Motor neuron (in vitro differentiated cells): ENCODE measurements at regions of chr3 and their contacts with region 1.

Region 1: DNA sequence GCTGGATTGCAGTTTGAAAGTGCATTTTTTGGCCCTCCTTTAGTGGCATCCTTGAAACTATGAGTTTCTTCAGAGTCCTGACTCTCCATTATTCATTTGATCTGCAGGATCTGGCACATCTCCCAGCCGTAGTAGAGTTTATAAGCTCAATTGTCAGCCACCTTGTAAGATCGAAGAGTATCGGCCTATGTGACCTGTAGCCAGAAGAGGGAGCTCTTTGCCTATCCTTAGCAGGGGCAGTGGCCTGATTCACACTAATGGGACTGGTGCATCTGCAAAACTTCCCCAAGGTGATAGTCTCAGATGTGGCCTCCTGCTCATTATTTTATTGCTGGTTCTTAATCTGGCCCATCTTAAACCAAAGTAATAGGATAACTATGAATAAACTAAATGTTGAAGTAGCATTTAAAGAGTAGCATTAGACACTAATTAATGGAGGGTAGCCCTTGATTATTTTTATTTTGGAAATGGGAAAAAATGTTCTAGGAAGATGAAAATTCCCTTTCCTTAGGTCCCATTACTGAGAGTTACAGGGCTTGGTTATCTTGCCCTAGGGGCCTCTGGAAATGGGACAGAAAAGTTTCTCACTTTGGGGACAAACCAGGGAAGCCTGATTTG is 21.2 kb downstream of the GCSAM start:
- ATAC-seq: peak; percentile 69 to 99 (median 83)
- H3K4me3 ChIP-seq: no peak overlapping the region
- H3K27ac ChIP-seq: no peak overlapping the region
- H3K4me1 ChIP-seq: no peaks in the 10 kb centered on the region

Region 2: GRCh38 chr3:111481551-111481950 is 630.3 kb before region 1 on chr3:
- in situ Hi-C with region 1: no loop called
- ATAC-seq: peak in 1 of 8 experiments; percentile 20
- H3K4me3 ChIP-seq: no peak overlapping the region
- H3K27ac ChIP-seq: no peak overlapping the region
- H3K4me1 ChIP-seq: peaks cover 6 to 10% of the 10 kb centered on the region in 2 donors

Region 3: GRCh38 chr3:112531358-112531781 is 419.5 kb after region 1 on chr3:
- in situ Hi-C with region 1: loop called in 1 of 9 experiments (anchors 25 kb)
- ATAC-seq: no peak
- H3K4me3 ChIP-seq: no peak overlapping the region
- H3K27ac ChIP-seq: no peak overlapping the region
- H3K4me1 ChIP-seq: no peaks in the 10 kb centered on the region